H1 (cell line): ENCODE measurements at regions of chr1 and their contacts with region 1.

Region 1: GRCh38 chr1:210373885-210374599 is 45.3 kb downstream of the HHAT start:
- DNase-seq: peak; percentile 89 to 90
- H3K4me3 ChIP-seq: no peak overlapping the region; a peak in 1 of 8 replicates
- H3K27ac ChIP-seq: peak overlapping the region; percentile 97
- H3K4me1 ChIP-seq: peaks cover 7 to 24% (median 18%) of the 10 kb centered on the region in 4 experiments
- H3K27me3 ChIP-seq: peaks cover 0 to 5% (median 2%) of the 10 kb centered on the region in 4 experiments; a peak in 1 of 7 replicates
- CTCF ChIP-seq: peak; percentile 66 to 96 (median 80)
- EP300 ChIP-seq: peak in 1 of 2 experiments; percentile 87; a peak in 1 of 3 replicates
- POLR2A ChIP-seq: peak; percentile 97 to 100
- RAD21 ChIP-seq: peak; percentile 59 to 68; a peak in 3 of 4 replicates

Region 2: DNA sequence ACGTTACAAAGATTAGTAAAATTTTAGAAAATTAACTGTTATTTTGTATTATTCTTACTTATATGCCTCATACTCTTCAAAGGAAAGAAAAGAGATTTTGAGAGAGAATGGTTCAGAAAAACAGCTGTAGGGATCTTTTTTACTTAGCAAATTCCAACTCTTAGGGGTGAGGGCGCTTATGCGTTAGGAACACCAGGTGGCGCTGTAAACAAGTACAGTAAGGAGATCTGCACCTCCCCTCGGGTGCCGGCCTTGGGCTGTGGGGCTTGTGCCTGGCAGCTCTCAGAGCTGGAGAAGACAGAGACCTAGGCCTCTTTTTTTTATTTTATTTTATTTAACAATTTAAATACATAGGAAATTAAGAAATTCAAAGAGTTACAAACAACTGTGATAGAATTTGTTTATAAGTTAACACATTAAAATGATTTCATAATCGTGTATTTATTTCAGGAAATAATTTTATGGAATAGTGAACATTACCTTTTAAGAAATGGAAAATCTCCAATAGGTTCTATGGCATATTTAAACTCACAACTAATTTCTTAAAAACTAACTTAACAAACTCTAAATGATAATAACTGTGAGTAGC is 513.7 kb before region 1 on chr1:
- CTCF ChIA-PET with region 1: interaction called, 3 read pairs
- POLR2A ChIA-PET with region 1: interaction called, 12 read pairs
- DNase-seq: peak in 1 of 2 experiments; percentile 82
- H3K4me3 ChIP-seq: no peak overlapping the region
- H3K27ac ChIP-seq: no peak overlapping the region
- H3K4me1 ChIP-seq: peaks cover 12 to 22% (median 17%) of the 10 kb centered on the region in 4 experiments
- H3K27me3 ChIP-seq: no peaks in the 10 kb centered on the region
- CTCF ChIP-seq: peak; percentile 65 to 88 (median 78)
- EP300 ChIP-seq: no peak
- POLR2A ChIP-seq: no peak
- RAD21 ChIP-seq: peak; percentile 86 to 90

Region 3: DNA sequence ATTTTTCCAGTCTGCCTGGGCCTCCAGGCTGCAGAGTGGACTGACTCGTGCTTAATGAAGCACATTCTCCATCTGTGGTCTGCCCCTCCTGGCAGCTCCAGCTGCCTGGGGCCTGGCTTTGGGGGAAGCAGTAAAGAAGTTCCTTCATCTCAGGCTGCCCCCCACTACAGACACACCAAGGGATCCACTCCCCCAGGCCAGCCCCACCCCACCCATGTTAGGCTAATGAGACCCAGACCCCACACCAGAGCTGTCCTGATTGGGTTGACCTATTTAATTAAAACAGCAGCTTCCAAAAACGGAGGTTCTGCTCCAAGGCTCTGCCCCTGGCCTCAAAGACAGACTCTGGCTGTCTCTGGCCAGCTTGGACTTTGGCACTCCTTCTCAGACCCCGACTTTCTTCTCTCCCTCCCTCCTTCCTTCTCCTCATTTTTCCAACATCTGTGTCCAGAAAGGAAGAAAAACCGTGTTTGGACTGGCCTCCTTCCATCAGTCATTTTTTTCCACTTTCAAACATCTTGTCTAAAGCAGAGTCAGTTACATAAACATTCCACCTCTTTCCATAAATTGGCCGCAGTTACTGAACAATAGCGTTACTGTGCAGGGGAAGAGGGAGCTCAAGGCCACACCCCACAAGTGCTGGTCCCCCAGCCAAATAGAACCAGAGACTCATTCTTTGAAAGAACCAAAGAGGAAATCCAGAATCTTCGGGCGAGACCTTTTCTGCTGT is 111.7 kb before region 1 on chr1:
- CTCF ChIA-PET with region 1: interaction called, 4 read pairs
- POLR2A ChIA-PET with region 1: interaction called, 20 read pairs
- DNase-seq: no peak
- H3K4me3 ChIP-seq: no peak overlapping the region
- H3K27ac ChIP-seq: no peak overlapping the region
- H3K4me1 ChIP-seq: peaks cover 0 to 13% (median 2%) of the 10 kb centered on the region in 4 experiments; a peak in 2 of 7 replicates
- H3K27me3 ChIP-seq: no peaks in the 10 kb centered on the region
- CTCF ChIP-seq: no peak
- EP300 ChIP-seq: no peak
- POLR2A ChIP-seq: no peak
- RAD21 ChIP-seq: no peak

Region 4: DNA sequence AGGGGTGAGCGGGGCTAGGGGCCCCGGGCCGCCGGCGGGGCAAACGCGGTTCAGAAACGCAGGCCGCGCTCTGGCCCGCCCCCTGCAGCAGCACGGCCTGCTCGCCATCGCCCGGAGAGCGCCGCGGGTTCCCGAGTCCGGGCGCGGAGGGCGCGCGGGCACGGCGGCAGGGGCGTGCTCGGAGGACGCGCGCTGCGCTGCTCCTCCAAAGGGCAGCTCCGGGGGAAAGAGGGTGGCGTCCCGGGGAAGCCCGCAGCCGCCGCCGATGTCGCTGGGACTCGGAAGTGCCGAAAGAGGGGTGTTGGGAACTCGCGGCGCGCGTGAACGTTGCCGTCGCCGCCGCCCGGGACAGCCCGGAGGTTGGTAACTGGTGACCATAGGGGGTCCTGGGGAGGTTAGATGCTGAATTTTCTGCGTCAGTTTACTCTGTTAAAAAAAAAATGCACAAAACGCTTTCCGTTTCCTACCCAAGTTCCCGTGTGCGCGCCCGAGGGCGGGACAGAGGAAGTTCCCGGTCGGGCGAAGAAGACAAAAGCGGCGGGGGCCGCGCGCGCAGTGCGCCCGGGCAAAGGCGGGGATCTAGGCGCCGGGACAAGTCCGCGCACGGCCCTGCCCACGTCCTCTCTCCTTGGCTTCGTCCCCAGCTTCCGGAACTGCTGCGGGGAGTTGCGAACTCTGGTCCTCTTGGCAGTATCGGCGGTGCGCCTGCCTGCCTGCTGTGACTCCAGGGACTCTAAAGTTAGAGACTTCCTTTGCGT is 45.1 kb before region 1 on chr1 and contains the start of gene HHAT:
- CTCF ChIA-PET with region 1: interaction called, 5 read pairs
- POLR2A ChIA-PET with region 1: interaction called, 22 read pairs
- DNase-seq: peak; percentile 10 to 75
- H3K4me3 ChIP-seq: peak within 1 kb of the TSS; percentile 58 to 77 (median 67)
- H3K27ac ChIP-seq: no peak within 1 kb of the TSS
- H3K4me1 ChIP-seq: peaks cover 0 to 5% (median 2%) of the 10 kb centered on the region in 4 experiments; a peak in 3 of 7 replicates
- H3K27me3 ChIP-seq: peaks cover 44 to 66% (median 61%) of the 10 kb centered on the region in 4 experiments
- CTCF ChIP-seq: no peak
- EP300 ChIP-seq: no peak
- POLR2A ChIP-seq: no peak
- RAD21 ChIP-seq: no peak
- total RNA-seq, gene HHAT: 0.15 and 0.27 TPM in 2 replicates

Region 5: GRCh38 chr1:210384630-210385029 is 10.6 kb after region 1 on chr1:
- CTCF ChIA-PET with region 1: interaction called, 27 read pairs
- POLR2A ChIA-PET with region 1: interaction called, 91 read pairs
- DNase-seq: no peak
- H3K4me3 ChIP-seq: no peak overlapping the region
- H3K27ac ChIP-seq: no peak overlapping the region
- H3K4me1 ChIP-seq: no peaks in the 10 kb centered on the region; a peak in 1 of 7 replicates
- H3K27me3 ChIP-seq: no peaks in the 10 kb centered on the region
- CTCF ChIP-seq: no peak
- EP300 ChIP-seq: no peak
- POLR2A ChIP-seq: no peak
- RAD21 ChIP-seq: no peak

Region 6: DNA sequence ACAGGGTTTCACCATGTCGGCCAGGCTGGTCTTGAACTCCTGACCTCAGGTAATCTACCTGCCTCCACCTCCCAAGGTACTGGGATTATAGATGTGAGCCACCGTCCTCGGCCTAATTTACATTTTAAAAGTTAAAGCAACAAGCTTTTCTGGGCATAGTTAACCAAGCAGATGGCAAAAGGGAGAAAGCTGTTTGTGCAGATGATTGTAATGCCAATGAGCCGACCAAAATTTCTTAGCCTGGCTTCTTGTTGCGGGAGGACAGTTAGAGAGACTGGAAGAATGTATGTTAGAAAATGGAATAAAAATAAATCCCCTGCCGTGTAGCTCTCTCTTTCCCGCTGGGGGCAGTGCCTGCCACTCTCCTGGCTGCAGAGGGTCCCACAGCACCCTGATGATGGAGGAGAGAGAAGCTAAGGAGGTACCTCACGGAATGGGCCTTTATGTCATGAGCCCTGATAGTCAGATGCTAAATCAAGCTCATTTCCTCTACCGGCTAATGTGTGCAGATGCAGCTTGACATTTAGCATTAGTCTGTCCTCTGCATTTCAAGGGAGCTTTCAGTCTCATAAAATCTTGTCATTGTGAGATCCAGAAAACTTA is 41.9 kb after region 1 on chr1:
- CTCF ChIA-PET with region 1: interaction called, 9 read pairs
- POLR2A ChIA-PET with region 1: interaction called, 13 read pairs
- DNase-seq: no peak
- H3K4me3 ChIP-seq: no peak overlapping the region
- H3K27ac ChIP-seq: no peak overlapping the region
- H3K4me1 ChIP-seq: peaks cover 2 to 6% (median 3%) of the 10 kb centered on the region in 4 experiments; a peak in 3 of 7 replicates
- H3K27me3 ChIP-seq: no peaks in the 10 kb centered on the region
- CTCF ChIP-seq: peak in 2 of 3 experiments; percentile 12 to 30; a peak in 2 of 4 replicates
- EP300 ChIP-seq: no peak
- POLR2A ChIP-seq: no peak
- RAD21 ChIP-seq: peak in 1 of 2 experiments; percentile 35; a peak in 2 of 4 replicates